Thyroid gland (tissue), 4 donors: ENCODE measurements at regions of chr9 and their contacts with region 1.

Region 1: DNA sequence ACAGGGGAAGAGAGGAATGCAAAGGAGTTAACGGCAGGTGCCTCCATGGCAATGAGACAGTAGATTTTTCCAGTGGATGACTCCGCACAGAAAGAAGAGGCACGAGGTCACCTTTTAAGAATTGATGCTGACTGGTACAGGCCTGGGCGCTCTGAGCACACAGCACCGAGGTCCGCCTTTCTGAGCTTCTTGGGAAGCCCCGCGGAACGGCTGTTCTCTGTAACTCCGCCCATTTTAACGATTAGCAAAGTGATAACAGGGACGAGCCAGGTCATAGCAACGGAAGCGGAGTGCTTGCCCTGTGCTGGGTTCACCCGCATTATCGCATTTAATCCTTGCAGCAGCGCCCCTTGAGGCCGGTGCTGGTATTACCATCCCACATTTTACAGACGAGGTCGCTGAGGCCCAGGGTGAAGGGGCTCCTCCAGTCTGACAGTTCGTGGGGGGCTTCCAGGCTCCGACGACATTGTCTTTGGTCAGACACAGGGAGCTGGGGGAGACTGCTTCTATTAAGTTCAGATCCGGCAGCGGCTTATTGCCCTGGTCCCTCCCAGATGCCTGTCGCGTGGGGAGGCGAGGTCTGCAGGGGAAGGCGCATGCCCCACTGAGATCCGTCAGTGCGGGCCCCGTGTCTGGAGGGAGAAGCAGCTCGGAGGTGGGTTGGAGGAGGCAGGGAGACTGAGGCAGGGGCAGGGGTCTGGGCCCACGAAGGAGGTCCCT is 22.4 kb upstream of the HMCN2 start:
- DNase-seq: peak; percentile 74 to 77
- H3K4me3 ChIP-seq: no peak overlapping the region
- H3K27ac ChIP-seq: no peak overlapping the region
- H3K4me1 ChIP-seq: peaks cover 32 to 40% of the 10 kb centered on the region in 2 donors
- H3K27me3 ChIP-seq: no peaks in the 10 kb centered on the region
- CTCF ChIP-seq: peak; percentile 87 to 98 (median 90)
- POLR2A ChIP-seq: no peak

Region 2: GRCh38 chr9:130327070-130327780 is 84.0 kb after region 1 on chr9:
- intact Hi-C with region 1: no loop called
- DNase-seq: no peak
- H3K4me3 ChIP-seq: no peak overlapping the region
- H3K27ac ChIP-seq: no peak overlapping the region
- H3K4me1 ChIP-seq: peaks cover 0 to 11% of the 10 kb centered on the region in 2 donors
- H3K27me3 ChIP-seq: no peaks in the 10 kb centered on the region
- CTCF ChIP-seq: no peak
- POLR2A ChIP-seq: no peak

Region 3: DNA sequence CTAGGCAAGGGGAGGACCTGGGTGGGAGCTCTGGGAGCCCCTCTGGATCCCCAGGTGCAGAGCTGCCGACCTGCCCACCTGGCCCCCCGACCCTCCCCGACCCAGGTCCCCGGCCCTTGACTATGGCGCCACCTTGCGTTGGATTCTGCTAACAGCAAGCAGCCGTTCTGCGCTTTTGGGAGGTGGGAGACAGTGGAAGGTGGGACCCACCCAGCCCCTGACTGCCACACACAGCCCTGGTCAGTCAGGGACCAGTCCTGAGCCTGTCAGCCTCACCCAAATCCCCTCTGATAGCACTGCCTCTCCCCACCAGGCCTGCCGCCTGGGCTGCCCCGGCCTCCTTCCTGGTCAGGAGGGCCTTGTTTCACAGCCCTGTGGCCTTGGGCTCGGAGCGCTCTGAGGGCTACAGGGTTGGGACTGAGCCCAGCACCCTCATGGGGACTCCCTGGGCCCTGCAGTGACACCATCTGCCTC is 100.3 kb after region 1 on chr9:
- intact Hi-C with region 1: loop called (anchors 5 kb)
- DNase-seq: peak in 1 of 2 donors; percentile 33
- H3K4me3 ChIP-seq: no peak overlapping the region
- H3K27ac ChIP-seq: no peak overlapping the region
- H3K4me1 ChIP-seq: no peaks in the 10 kb centered on the region
- H3K27me3 ChIP-seq: no peaks in the 10 kb centered on the region
- CTCF ChIP-seq: peak; percentile 49 to 85 (median 74)
- POLR2A ChIP-seq: no peak